A673 (cell line): ENCODE measurements at regions of chr4 and their contacts with region 1.

Region 1: DNA sequence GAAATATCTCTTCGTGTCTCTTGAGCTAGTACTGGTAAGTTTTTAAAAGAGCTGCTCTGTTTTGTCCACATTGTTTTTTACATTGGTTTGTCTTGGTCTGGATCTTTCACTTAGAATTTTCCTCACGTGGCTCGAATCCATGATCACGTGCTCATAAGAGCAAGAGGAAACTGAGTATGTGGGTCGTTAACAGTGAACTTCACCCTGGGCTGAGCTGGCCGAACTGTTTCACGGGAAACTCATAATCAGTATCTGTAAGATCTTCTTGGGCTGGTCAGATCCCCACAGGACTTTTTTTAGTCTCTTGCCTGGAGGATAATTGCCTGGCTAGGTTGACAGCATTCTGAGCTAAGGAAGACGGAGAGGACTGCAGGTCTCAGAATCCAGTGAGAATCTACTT is 77.8 kb upstream of the HELT start:
- DNase-seq: no peak
- H3K4me3 ChIP-seq: no peak overlapping the region
- H3K27ac ChIP-seq: no peak overlapping the region
- H3K4me1 ChIP-seq: no peaks in the 10 kb centered on the region
- H3K27me3 ChIP-seq: no peaks in the 10 kb centered on the region
- CTCF ChIP-seq: no peak

Region 2: DNA sequence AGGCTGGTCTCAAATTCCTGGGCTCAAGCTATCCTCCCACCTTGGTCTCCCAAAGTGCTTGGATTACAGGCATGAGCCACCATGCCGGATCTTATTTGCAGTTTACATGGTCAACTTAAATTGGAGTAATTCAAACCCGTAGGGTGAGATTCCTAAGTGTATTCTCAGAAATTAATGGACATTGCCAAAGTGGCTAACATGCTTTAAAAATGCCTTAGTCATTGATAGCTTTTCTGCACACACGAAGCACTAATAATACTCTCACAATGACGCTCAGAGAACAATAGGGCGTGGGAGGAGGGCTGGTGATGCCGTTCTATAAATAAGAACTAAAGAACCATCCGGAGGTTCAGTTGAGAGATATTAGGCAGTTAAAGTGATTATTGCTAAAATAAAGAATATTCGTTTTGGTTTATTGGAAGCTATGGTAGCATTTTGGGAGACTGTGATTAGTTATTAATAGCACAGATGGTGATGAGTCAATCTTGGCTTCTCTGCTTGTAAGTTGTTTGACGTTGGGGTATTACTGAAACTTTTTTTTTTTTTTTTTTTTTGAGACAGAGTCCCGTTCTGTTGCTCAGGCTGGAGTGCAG is 1202.3 kb before region 1 on chr4:
- CTCF ChIA-PET with region 1: no interaction called
- POLR2A ChIA-PET with region 1: interaction called, 31 read pairs
- intact Hi-C with region 1: no loop called
- DNase-seq: no peak
- H3K4me3 ChIP-seq: no peak overlapping the region
- H3K27ac ChIP-seq: no peak overlapping the region
- H3K4me1 ChIP-seq: no peaks in the 10 kb centered on the region
- H3K27me3 ChIP-seq: no peaks in the 10 kb centered on the region
- CTCF ChIP-seq: no peak

Region 3: GRCh38 chr4:184287697-184288255 is 652.7 kb before region 1 on chr4:
- CTCF ChIA-PET with region 1: no interaction called
- POLR2A ChIA-PET with region 1: no interaction called
- intact Hi-C with region 1: no loop called
- DNase-seq: peak; percentile 55
- H3K4me3 ChIP-seq: no peak overlapping the region
- H3K27ac ChIP-seq: no peak overlapping the region
- H3K4me1 ChIP-seq: peaks cover 7% of the 10 kb centered on the region
- H3K27me3 ChIP-seq: no peaks in the 10 kb centered on the region
- CTCF ChIP-seq: peak; percentile 40; the same call in 1 of the 2 replicates

Region 4: GRCh38 chr4:184899261-184900134 is 41.0 kb before region 1 on chr4:
- CTCF ChIA-PET with region 1: no interaction called
- POLR2A ChIA-PET with region 1: no interaction called
- intact Hi-C with region 1: no loop called
- DNase-seq: no peak
- H3K4me3 ChIP-seq: no peak overlapping the region
- H3K27ac ChIP-seq: no peak overlapping the region
- H3K4me1 ChIP-seq: peaks cover 13% of the 10 kb centered on the region
- H3K27me3 ChIP-seq: no peaks in the 10 kb centered on the region
- CTCF ChIP-seq: no peak